ENCODE measurements at regions of chr19 and their contacts with region 1.

Region 1: DNA sequence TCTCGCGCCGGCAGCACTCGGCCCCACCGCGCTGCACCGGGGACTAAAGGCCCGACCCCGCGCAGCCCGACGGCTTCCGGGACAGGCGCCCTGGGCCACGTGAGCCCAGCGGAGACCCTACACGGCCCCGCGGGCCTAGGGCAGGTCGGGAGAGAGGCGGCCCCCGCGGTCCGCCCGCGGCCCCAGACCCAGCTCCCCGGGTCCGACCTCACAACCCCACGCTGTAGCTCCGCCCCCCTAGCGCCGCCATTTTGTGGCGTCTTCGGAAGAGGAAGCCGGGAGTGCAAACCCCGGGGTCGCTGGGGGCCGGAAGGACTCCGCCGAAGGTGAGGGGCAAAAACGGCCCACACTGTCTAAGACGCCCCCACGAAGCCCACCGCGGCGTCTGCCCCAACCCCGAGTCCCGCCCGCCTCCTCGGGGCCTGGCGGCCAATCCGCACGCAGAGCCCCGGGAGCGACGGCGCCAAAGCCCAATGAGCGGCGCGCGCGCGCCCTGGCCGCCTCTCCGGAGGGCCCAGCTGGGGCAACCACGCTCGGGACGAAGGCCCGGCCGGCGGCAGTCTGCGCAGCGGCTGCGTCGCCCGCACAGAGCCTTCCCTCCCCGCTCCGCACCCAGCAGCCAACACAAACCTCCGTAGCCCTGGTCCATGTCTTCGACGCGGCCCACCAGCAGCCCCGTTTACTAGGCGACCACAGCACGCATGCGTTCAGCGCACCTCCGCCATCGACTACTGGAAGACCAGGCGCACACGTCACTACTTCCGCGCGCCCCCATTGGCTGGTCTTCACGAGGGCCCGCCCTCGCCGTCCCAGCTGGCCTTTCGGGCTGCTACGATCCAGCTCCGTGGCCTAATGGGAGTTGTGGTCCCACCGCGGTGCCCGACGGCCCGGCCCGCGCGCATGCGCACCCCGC is at the start of gene AKAP8:
- DNase-seq: peak; percentile 96 to 100 (median 98)
- ATAC-seq: peak; percentile 90
- H3K4me3 ChIP-seq: peak within 1 kb of the TSS; percentile 75
- H3K4me3 Mint-ChIP-seq: peak within 1 kb of the TSS; percentile 100
- H3K27ac ChIP-seq: peak within 1 kb of the TSS; percentile 96
- H3K27ac Mint-ChIP-seq: peak within 1 kb of the TSS; percentile 97
- H3K4me1 ChIP-seq: peaks cover 35% of the 10 kb centered on the region
- H3K4me1 Mint-ChIP-seq: peaks cover 48% of the 10 kb centered on the region
- H3K27me3 ChIP-seq: no peaks in the 10 kb centered on the region
- H3K27me3 Mint-ChIP-seq: no peaks in the 10 kb centered on the region
- CTCF ChIP-seq: no peak
- total RNA-seq, gene AKAP8: 87.5 to 90.1 TPM

Region 2: GRCh38 chr19:15038297-15038696 is 341.0 kb before region 1 on chr19:
- CTCF ChIA-PET with region 1: no interaction called
- POLR2A ChIA-PET with region 1: no interaction called
- intact Hi-C with region 1: no loop called
- DNase-seq: no peak
- ATAC-seq: no peak
- H3K4me3 ChIP-seq: no peak overlapping the region
- H3K4me3 Mint-ChIP-seq: no peak overlapping the region
- H3K27ac ChIP-seq: no peak overlapping the region
- H3K27ac Mint-ChIP-seq: no peak overlapping the region
- H3K4me1 ChIP-seq: no peaks in the 10 kb centered on the region
- H3K4me1 Mint-ChIP-seq: no peaks in the 10 kb centered on the region
- H3K27me3 ChIP-seq: peaks cover 10 to 22% of the 10 kb centered on the region in 2 experiments
- H3K27me3 Mint-ChIP-seq: peaks cover 41% of the 10 kb centered on the region
- CTCF ChIP-seq: no peak

Region 3: DNA sequence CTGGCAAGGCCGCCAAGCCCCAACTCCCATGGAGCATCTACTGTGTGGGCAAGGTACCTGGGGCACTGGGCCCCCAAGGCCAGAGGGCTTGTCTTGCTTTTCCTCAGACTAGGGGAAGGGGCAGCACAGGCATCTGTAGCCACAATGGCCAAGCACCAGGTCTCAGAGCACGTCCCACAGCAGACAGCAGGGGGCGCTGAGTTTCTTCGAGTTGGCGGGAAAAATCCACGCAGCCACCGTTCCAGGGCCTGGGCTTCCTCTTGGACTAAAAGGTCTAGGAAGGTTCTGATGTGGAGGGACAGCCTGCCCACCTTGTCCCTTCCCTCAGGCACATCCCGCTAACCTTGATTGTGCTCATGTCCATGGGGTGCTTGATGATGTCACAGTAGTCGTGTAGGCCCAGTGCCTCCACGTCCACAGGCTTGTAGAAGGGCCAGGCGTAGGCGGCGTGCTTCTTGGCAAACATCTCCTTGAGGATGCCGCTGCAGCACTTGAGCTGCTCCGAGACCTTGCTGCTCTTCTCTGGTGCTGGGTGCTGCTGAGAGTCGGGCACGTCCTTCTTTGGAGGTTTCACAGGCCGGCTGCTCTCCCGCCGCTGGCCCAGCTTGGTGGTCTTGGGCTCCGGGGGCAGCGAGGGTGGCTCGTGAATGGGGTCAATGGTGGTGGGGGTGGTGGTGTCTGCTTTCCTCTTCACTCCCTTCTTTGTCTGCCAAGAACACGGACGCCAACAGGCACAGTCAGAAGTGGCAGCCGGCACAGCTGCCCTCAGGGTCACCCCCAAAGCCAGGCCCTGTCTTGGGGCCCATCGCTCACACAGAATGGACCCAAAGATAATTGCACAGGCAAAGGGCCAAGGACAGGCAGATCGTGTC is 115.0 kb before region 1 on chr19:
- CTCF ChIA-PET with region 1: no interaction called
- POLR2A ChIA-PET with region 1: interaction called, 5 read pairs
- intact Hi-C with region 1: loop called (anchors 5 kb)
- DNase-seq: peak; percentile 58 to 82 (median 66)
- ATAC-seq: peak; percentile 80
- H3K4me3 ChIP-seq: no peak overlapping the region
- H3K4me3 Mint-ChIP-seq: no peak overlapping the region
- H3K27ac ChIP-seq: no peak overlapping the region
- H3K27ac Mint-ChIP-seq: no peak overlapping the region
- H3K4me1 ChIP-seq: no peaks in the 10 kb centered on the region
- H3K4me1 Mint-ChIP-seq: peaks cover 13% of the 10 kb centered on the region
- H3K27me3 ChIP-seq: no peaks in the 10 kb centered on the region
- H3K27me3 Mint-ChIP-seq: no peaks in the 10 kb centered on the region
- CTCF ChIP-seq: peak; percentile 75

Region 4: DNA sequence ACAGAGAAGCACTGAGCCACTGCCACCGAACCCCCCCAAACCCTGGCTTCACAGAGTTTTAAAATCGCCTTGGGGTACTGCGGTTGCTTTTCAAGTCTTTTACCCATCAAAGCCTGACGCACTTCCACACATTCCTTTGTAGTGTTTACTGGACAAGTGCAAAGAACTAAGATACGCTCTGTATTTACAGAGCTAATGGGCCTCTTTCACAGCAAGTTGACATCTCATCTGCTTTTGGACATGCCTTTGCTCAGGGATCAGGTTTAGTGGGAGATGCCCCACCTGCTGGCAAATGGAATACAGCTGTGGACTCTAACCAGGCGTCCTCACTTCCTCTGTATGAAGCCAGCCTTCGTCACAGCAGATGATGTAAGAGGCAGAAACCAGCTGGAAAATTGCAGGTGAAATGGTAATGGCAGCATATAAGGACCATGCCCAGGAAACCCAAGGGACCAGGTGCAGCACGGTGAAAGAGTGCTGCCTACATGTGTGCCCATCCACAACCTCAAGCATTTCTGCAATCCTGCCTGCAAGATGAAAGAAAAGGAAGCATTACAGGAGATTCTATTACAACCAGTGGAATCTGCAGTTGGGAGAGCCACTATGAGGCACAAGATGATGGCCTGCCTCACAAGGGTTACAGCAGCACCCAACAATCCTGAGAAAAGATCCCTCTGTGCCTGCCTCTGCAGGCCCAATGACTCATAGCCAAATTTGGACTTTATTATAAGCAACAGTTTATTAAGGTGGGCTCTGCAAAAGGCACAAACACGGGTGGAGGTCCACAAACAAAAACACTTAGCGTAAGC is 81.7 kb before region 1 on chr19:
- CTCF ChIA-PET with region 1: no interaction called
- POLR2A ChIA-PET with region 1: interaction called, 19 read pairs
- intact Hi-C with region 1: no loop called
- DNase-seq: peak in 4 of 14 experiments; percentile 23 to 53 (median 44)
- ATAC-seq: peak; percentile 52
- H3K4me3 ChIP-seq: no peak overlapping the region
- H3K4me3 Mint-ChIP-seq: peak overlapping the region; percentile 81
- H3K27ac ChIP-seq: no peak overlapping the region
- H3K27ac Mint-ChIP-seq: peak overlapping the region; percentile 64
- H3K4me1 ChIP-seq: peaks cover 89% of the 10 kb centered on the region
- H3K4me1 Mint-ChIP-seq: peaks cover 89% of the 10 kb centered on the region
- H3K27me3 ChIP-seq: no peaks in the 10 kb centered on the region
- H3K27me3 Mint-ChIP-seq: no peaks in the 10 kb centered on the region
- CTCF ChIP-seq: no peak

Region 5: GRCh38 chr19:15432629-15433518 is 53.5 kb after region 1 on chr19:
- CTCF ChIA-PET with region 1: no interaction called
- POLR2A ChIA-PET with region 1: interaction called, 37 read pairs
- intact Hi-C with region 1: loop called in 1 of 2 experiments (anchors 1 kb)
- DNase-seq: peak; percentile 85 to 97 (median 92)
- ATAC-seq: peak; percentile 94
- H3K4me3 ChIP-seq: peak overlapping the region; percentile 87
- H3K4me3 Mint-ChIP-seq: peak overlapping the region; percentile 90
- H3K27ac ChIP-seq: peak overlapping the region; percentile 40 to 65
- H3K27ac Mint-ChIP-seq: peak overlapping the region; percentile 82
- H3K4me1 ChIP-seq: peaks cover 38% of the 10 kb centered on the region
- H3K4me1 Mint-ChIP-seq: peaks cover 28% of the 10 kb centered on the region
- H3K27me3 ChIP-seq: no peaks in the 10 kb centered on the region
- H3K27me3 Mint-ChIP-seq: no peaks in the 10 kb centered on the region
- CTCF ChIP-seq: no peak

Region 6: GRCh38 chr19:15555759-15556633 is 176.7 kb after region 1 on chr19:
- CTCF ChIA-PET with region 1: interaction called, 15 read pairs
- POLR2A ChIA-PET with region 1: interaction called, 31 read pairs
- intact Hi-C with region 1: loop called (anchors 1 to 2 kb)
- DNase-seq: peak; percentile 92 to 99 (median 96)
- ATAC-seq: peak; percentile 86
- H3K4me3 ChIP-seq: peak overlapping the region; percentile 60
- H3K4me3 Mint-ChIP-seq: peak overlapping the region; percentile 83
- H3K27ac ChIP-seq: peak overlapping the region; percentile 55 to 73
- H3K27ac Mint-ChIP-seq: peak overlapping the region; percentile 83
- H3K4me1 ChIP-seq: peaks cover 31% of the 10 kb centered on the region
- H3K4me1 Mint-ChIP-seq: peaks cover 16% of the 10 kb centered on the region
- H3K27me3 ChIP-seq: peaks cover 0 to 3% of the 10 kb centered on the region in 2 experiments
- H3K27me3 Mint-ChIP-seq: peaks cover 4% of the 10 kb centered on the region
- CTCF ChIP-seq: peak; percentile 81

Region 7: GRCh38 chr19:15570420-15570819 is 191.1 kb after region 1 on chr19:
- CTCF ChIA-PET with region 1: no interaction called
- POLR2A ChIA-PET with region 1: no interaction called
- intact Hi-C with region 1: no loop called
- DNase-seq: no peak
- ATAC-seq: no peak
- H3K4me3 ChIP-seq: no peak overlapping the region
- H3K4me3 Mint-ChIP-seq: no peak overlapping the region
- H3K27ac ChIP-seq: no peak overlapping the region
- H3K27ac Mint-ChIP-seq: no peak overlapping the region
- H3K4me1 ChIP-seq: no peaks in the 10 kb centered on the region
- H3K4me1 Mint-ChIP-seq: no peaks in the 10 kb centered on the region
- H3K27me3 ChIP-seq: peaks cover 12% of the 10 kb centered on the region in 2 experiments
- H3K27me3 Mint-ChIP-seq: peaks cover 66% of the 10 kb centered on the region
- CTCF ChIP-seq: no peak

Region 8: DNA sequence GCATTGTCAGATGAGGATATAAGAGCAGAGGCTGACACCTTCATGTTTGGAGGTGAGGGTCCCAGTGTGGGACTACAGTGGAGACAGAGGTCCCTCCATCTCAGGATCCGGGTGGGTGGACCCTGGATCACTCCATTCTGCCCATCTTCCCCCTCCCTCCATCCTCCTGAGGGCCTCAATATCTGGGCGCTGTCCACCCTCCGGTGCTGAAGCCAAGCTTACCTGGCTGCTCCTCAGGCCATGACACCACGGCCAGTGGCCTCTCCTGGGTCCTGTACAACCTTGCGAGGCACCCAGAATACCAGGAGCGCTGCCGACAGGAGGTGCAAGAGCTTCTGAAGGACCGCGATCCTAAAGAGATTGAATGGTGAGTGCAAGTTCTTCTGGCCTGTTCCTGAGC is 305.5 kb after region 1 on chr19:
- CTCF ChIA-PET with region 1: no interaction called
- POLR2A ChIA-PET with region 1: no interaction called
- intact Hi-C with region 1: no loop called
- DNase-seq: no peak
- ATAC-seq: no peak
- H3K4me3 ChIP-seq: no peak overlapping the region
- H3K4me3 Mint-ChIP-seq: no peak overlapping the region
- H3K27ac ChIP-seq: no peak overlapping the region
- H3K27ac Mint-ChIP-seq: no peak overlapping the region
- H3K4me1 ChIP-seq: no peaks in the 10 kb centered on the region
- H3K4me1 Mint-ChIP-seq: no peaks in the 10 kb centered on the region
- H3K27me3 ChIP-seq: peaks cover 12 to 16% of the 10 kb centered on the region in 2 experiments
- H3K27me3 Mint-ChIP-seq: peaks cover 75% of the 10 kb centered on the region
- CTCF ChIP-seq: no peak

Measured in CD4-positive, alpha-beta T cell (primary cell).